ENCODE measurements at regions of chr17 and their contacts with region 1.

Region 1: DNA sequence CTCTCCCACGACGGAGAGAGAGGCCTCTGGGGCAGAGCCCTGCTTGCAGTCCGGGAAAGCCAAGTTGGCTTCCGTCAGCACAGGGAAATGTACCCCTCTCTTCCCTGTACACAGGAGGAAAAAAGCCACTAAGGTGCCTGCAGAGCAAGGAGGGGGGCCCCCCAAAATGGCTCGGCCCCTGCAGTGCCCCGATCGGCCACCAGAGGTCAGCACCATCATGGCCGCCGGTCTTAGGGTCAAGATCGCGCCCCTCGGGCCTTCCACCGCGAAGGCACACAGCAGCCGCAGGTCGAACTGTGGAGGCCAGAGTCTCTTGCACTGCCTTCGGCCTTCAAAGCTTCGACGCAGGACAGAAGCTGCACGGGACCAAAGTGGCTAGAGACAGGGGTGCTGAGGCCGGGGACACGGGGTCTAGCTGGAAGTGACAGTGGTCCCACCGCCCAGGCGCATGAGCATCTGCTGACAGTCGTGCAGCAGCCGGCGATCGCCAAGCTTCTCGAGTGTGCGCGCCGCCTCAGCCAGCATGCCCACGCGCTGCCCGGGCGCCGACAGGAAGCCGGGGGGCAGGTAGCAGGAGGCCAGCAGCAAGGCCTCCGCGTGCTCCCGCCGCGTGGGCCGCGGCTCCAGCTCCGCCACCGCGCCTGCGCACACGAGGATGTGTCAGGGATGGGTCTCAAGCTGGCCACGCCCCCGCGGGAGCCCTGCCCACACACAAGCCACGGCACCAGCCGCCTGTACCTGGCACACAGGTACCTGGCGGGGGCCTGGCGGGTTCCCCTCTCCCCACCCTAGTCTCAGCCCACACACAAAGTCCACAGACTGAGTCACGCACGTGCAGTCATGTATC is 24.4 kb downstream of the SREBF1 start:
- DNase-seq: peak; percentile 62
- H3K4me3 Mint-ChIP-seq: no peak overlapping the region
- H3K27ac Mint-ChIP-seq: no peak overlapping the region
- H3K4me1 Mint-ChIP-seq: peaks cover 5% of the 10 kb centered on the region
- H3K27me3 Mint-ChIP-seq: no peaks in the 10 kb centered on the region
- CTCF ChIP-seq: peak; percentile 98

Region 2: GRCh38 chr17:17712268-17712924 is 100.0 kb before region 1 on chr17:
- CTCF ChIA-PET with region 1: no interaction called
- POLR2A ChIA-PET with region 1: no interaction called
- intact Hi-C with region 1: no loop called
- DNase-seq: peak; percentile 51
- H3K4me3 Mint-ChIP-seq: no peak overlapping the region
- H3K27ac Mint-ChIP-seq: peak overlapping the region; percentile 41
- H3K4me1 Mint-ChIP-seq: peaks cover 28% of the 10 kb centered on the region
- H3K27me3 Mint-ChIP-seq: no peaks in the 10 kb centered on the region
- CTCF ChIP-seq: no peak

Region 3: GRCh38 chr17:17752089-17752820 is 60.2 kb before region 1 on chr17:
- CTCF ChIA-PET with region 1: no interaction called
- POLR2A ChIA-PET with region 1: no interaction called
- intact Hi-C with region 1: no loop called
- DNase-seq: peak; percentile 95
- H3K4me3 Mint-ChIP-seq: peak overlapping the region; percentile 88
- H3K27ac Mint-ChIP-seq: peak overlapping the region; percentile 84
- H3K4me1 Mint-ChIP-seq: peaks cover 17% of the 10 kb centered on the region
- H3K27me3 Mint-ChIP-seq: no peaks in the 10 kb centered on the region
- CTCF ChIP-seq: no peak

Region 4: GRCh38 chr17:17772231-17772630 is 40.2 kb before region 1 on chr17:
- CTCF ChIA-PET with region 1: no interaction called
- POLR2A ChIA-PET with region 1: no interaction called
- intact Hi-C with region 1: no loop called
- DNase-seq: no peak
- H3K4me3 Mint-ChIP-seq: no peak overlapping the region
- H3K27ac Mint-ChIP-seq: peak overlapping the region; percentile 92
- H3K4me1 Mint-ChIP-seq: peaks cover 40% of the 10 kb centered on the region
- H3K27me3 Mint-ChIP-seq: no peaks in the 10 kb centered on the region
- CTCF ChIP-seq: no peak

Region 5: GRCh38 chr17:17823433-17824118 is 11.1 kb after region 1 on chr17:
- CTCF ChIA-PET with region 1: interaction called, 21 read pairs
- POLR2A ChIA-PET with region 1: interaction called, 5 read pairs
- intact Hi-C with region 1: no loop called
- DNase-seq: peak; percentile 91
- H3K4me3 Mint-ChIP-seq: peak overlapping the region; percentile 77
- H3K27ac Mint-ChIP-seq: peak overlapping the region; percentile 76
- H3K4me1 Mint-ChIP-seq: peaks cover 71% of the 10 kb centered on the region
- H3K27me3 Mint-ChIP-seq: no peaks in the 10 kb centered on the region
- CTCF ChIP-seq: no peak

Region 6: DNA sequence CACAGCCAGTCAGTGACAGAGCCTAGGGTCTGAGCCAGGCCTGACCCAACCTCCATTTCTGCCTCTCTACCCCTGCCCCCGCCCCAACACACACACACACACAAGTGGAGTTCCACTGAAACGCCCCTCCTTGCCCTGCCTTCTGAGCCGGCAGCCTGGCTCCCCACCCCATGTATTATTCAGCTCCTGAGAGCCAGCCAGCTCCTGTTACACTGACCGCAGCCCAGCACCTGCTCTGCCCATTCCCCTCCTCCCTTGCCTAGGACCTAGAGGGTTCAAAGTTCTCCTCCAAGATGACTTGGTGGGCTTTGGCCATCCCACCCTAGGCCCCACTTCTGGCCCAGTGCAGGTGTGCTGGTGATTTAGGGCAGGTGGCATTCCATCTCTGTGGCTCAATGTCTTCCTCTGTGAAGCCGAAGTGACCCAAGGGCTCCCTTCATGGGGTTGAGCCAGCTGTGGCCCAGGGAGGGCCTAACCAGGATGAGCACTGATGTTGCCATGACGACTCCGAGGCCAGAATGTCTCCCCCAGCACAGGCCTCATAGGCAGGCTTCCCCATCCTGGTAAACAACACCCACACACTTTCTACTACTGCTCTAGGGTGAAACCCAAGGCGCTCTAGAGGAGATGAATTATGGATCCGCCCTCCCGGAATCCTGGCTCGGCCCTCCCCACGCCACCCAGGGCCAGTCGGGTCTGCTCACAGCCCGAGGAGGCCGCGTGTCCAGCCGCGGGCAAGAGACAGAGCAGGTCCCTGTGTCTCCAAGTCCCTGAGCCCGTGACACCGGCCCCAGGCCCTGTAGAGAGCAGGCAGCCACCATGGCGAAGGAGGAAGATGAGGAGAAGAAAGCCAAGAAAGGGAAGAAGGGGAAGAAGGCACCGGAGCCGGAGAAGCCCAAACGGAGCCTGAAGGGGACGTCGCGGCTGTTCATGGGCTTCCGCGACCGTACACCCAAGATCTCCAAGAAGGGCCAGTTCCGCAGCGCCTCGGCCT is 305.8 kb after region 1 on chr17:
- CTCF ChIA-PET with region 1: no interaction called
- POLR2A ChIA-PET with region 1: no interaction called
- intact Hi-C with region 1: no loop called
- DNase-seq: no peak
- H3K4me3 Mint-ChIP-seq: no peak overlapping the region
- H3K27ac Mint-ChIP-seq: no peak overlapping the region
- H3K4me1 Mint-ChIP-seq: no peaks in the 10 kb centered on the region
- H3K27me3 Mint-ChIP-seq: no peaks in the 10 kb centered on the region
- CTCF ChIP-seq: no peak